H1 (cell line): ENCODE measurements at regions of chr11 and their contacts with region 1.

Region 1: DNA sequence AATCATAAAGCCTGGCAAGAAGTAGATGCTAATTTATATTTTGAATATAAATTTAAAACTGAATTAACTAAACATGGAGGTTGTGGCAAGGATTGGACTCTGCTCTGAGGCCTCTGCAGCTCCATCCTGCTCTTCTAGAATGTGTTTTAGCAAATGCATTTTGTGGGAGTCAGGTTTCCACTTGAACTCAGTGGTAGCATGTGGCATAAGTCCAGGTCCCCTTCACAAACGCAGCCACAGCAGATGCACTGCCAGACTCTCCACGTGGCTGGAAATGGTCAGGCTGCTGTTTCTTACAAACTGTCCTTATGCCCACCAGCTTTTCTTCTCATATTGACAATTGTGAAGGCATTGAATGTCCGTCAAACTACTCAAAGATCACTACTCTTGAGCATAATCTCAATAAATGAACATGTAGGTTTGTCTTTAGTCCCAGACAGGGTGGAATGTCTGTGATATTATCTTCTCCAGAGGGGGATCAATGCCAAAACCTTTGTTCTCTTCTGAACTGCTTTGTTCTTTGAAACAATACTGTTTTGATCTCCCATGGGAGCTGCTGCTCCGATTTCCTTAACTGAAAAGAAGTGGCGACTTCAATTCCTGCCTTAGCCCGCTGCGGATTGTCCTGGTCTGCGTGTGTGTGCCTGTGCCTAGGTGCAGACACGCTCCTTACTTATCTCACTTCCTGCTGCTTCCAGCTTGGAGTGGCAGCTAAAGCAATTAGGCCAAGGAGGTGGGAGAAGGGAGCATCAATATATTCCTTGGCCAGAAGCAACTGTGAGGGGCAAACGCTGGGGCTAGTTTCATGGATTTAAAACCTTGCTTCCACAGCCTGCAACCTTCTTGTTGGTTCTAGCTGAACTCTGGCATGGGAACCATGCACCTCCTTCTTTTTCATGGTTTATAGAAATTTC is 24.2 kb downstream of the EIF4G2 start:
- DNase-seq: no peak
- H3K4me3 ChIP-seq: no peak overlapping the region
- H3K27ac ChIP-seq: no peak overlapping the region
- H3K4me1 ChIP-seq: peaks cover 0 to 3% (median 1%) of the 10 kb centered on the region in 4 experiments; a peak in 4 of 7 replicates
- H3K27me3 ChIP-seq: no peaks in the 10 kb centered on the region
- CTCF ChIP-seq: no peak
- EP300 ChIP-seq: no peak
- POLR2A ChIP-seq: no peak
- RAD21 ChIP-seq: no peak

Region 2: DNA sequence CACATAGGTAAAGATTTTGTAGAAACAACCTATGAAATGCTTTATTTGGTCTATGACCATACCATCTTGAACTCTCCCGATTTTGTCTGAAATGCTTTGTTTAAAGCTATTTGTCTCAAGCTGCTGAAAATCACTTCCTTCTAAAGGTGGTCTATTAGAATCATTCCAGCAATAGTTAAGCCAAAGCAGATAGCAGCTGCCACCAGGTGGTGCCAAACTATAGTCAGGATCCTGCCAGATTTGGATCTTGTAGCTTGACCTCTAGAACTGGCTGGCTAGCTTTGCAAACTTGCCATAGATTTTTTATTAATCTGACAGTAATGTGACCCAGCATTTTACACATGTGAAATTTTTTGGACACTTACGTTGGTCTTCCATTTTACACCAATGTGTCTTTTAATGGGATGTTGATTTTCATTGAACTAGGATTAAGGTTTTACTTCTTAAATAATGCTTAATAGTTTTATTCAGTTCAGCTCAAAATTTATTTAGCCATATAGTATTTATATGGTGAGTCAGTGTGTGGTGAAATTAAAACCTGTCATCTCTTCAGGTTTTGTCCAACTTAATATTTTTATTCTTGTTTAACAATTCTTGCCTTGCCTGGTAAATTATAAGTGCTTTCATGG is 13.7 kb before region 1 on chr11:
- CTCF ChIA-PET with region 1: interaction called, 64 read pairs
- POLR2A ChIA-PET with region 1: interaction called, 4 read pairs
- DNase-seq: peak in 1 of 2 experiments; percentile 61
- H3K4me3 ChIP-seq: no peak overlapping the region
- H3K27ac ChIP-seq: no peak overlapping the region
- H3K4me1 ChIP-seq: peaks cover 0 to 6% (median 0%) of the 10 kb centered on the region in 4 experiments; a peak in 1 of 7 replicates
- H3K27me3 ChIP-seq: no peaks in the 10 kb centered on the region
- CTCF ChIP-seq: peak; percentile 12 to 84 (median 60)
- EP300 ChIP-seq: no peak
- POLR2A ChIP-seq: no peak
- RAD21 ChIP-seq: peak; percentile 48 to 59

Region 3: GRCh38 chr11:10797531-10797930 is 13.0 kb after region 1 on chr11:
- CTCF ChIA-PET with region 1: interaction called, 10 read pairs
- POLR2A ChIA-PET with region 1: interaction called, 595 read pairs
- DNase-seq: no peak
- H3K4me3 ChIP-seq: no peak overlapping the region
- H3K27ac ChIP-seq: no peak overlapping the region
- H3K4me1 ChIP-seq: peaks cover 0 to 3% (median 2%) of the 10 kb centered on the region in 4 experiments; a peak in 2 of 7 replicates
- H3K27me3 ChIP-seq: peaks cover 0 to 2% (median 0%) of the 10 kb centered on the region in 4 experiments; a peak in 2 of 7 replicates
- CTCF ChIP-seq: no peak
- EP300 ChIP-seq: no peak
- POLR2A ChIP-seq: no peak
- RAD21 ChIP-seq: no peak